ENCODE measurements at regions of chr7 and their contacts with region 1.

Region 1: GRCh38 chr7:7103343-7104313 is 78.7 kb upstream of the C1GALT1 start:
- DNase-seq: peak in 1 of 2 experiments; percentile 44
- H3K4me3 ChIP-seq: no peak overlapping the region
- H3K4me3 Mint-ChIP-seq: no peak overlapping the region
- H3K27ac Mint-ChIP-seq: peak overlapping the region; percentile 28
- H3K4me1 ChIP-seq: peaks cover 23% of the 10 kb centered on the region
- H3K4me1 Mint-ChIP-seq: peaks cover 34% of the 10 kb centered on the region
- H3K27me3 ChIP-seq: no peaks in the 10 kb centered on the region
- H3K27me3 Mint-ChIP-seq: no peaks in the 10 kb centered on the region
- CTCF ChIP-seq: peak; percentile 52 to 64

Region 2: GRCh38 chr7:7077945-7078344 is 25.7 kb before region 1 on chr7:
- CTCF ChIA-PET with region 1: no interaction called
- POLR2A ChIA-PET with region 1: no interaction called
- intact Hi-C with region 1: no loop called
- DNase-seq: no peak
- H3K4me3 ChIP-seq: no peak overlapping the region
- H3K4me3 Mint-ChIP-seq: no peak overlapping the region
- H3K27ac Mint-ChIP-seq: no peak overlapping the region
- H3K4me1 ChIP-seq: no peaks in the 10 kb centered on the region
- H3K4me1 Mint-ChIP-seq: peaks cover 4% of the 10 kb centered on the region
- H3K27me3 ChIP-seq: no peaks in the 10 kb centered on the region
- H3K27me3 Mint-ChIP-seq: no peaks in the 10 kb centered on the region
- CTCF ChIP-seq: no peak

Region 3: GRCh38 chr7:7265081-7265686 is 161.6 kb after region 1 on chr7:
- CTCF ChIA-PET with region 1: no interaction called
- POLR2A ChIA-PET with region 1: no interaction called
- intact Hi-C with region 1: loop called (anchors 10 kb)
- DNase-seq: no peak
- H3K4me3 ChIP-seq: no peak overlapping the region
- H3K4me3 Mint-ChIP-seq: no peak overlapping the region
- H3K27ac Mint-ChIP-seq: peak overlapping the region; percentile 97
- H3K4me1 ChIP-seq: peaks cover 58% of the 10 kb centered on the region
- H3K4me1 Mint-ChIP-seq: peaks cover 41% of the 10 kb centered on the region
- H3K27me3 ChIP-seq: no peaks in the 10 kb centered on the region; the same call in 1 of the 2 replicates
- H3K27me3 Mint-ChIP-seq: no peaks in the 10 kb centered on the region
- CTCF ChIP-seq: no peak

Region 4: GRCh38 chr7:7352845-7353244 is 249.2 kb after region 1 on chr7:
- CTCF ChIA-PET with region 1: interaction called, 4 read pairs
- POLR2A ChIA-PET with region 1: no interaction called
- intact Hi-C with region 1: loop called (anchors 5 kb)
- DNase-seq: no peak
- H3K4me3 ChIP-seq: no peak overlapping the region
- H3K4me3 Mint-ChIP-seq: no peak overlapping the region
- H3K27ac Mint-ChIP-seq: no peak overlapping the region
- H3K4me1 ChIP-seq: peaks cover 12% of the 10 kb centered on the region; the same call in 1 of the 2 replicates
- H3K4me1 Mint-ChIP-seq: peaks cover 16% of the 10 kb centered on the region
- H3K27me3 ChIP-seq: no peaks in the 10 kb centered on the region
- H3K27me3 Mint-ChIP-seq: no peaks in the 10 kb centered on the region
- CTCF ChIP-seq: peak; percentile 15 to 20

Region 5: DNA sequence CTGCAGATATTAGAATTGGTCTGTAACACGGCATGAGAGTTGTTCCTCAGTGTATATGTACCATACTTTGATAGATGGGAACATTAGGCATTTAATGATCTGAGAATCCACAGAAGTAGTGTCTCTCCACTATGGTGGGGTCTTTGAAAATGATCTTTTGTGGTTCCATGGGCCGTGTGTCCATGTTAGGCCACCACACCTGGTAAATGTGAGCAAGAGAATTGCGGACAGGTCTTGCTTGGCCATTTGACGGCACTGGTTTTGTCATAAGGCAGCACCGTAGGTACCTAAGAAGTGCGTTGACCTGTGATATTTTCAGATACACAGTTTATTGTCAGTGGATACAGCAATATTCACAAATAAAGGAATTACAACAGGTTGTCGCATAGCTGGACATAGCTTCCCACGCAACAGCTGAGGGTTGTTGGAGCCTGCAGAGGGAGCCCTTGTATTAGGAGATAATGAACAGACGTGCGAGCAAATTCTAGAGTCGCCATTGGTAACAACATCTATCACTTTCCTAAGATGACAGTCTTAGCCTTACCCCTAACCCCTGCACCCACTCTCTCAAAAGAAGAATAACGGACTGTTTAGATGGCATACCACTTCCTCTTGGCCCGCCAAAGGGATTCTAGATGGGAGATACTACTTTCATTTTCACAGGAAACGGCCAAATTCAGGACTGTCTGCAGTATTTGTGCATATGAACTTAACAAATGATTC is 320.7 kb after region 1 on chr7:
- CTCF ChIA-PET with region 1: interaction called, 5 read pairs
- POLR2A ChIA-PET with region 1: no interaction called
- intact Hi-C with region 1: loop called (anchors 2 kb)
- DNase-seq: peak; percentile 62 to 75
- H3K4me3 ChIP-seq: no peak overlapping the region
- H3K4me3 Mint-ChIP-seq: no peak overlapping the region
- H3K27ac Mint-ChIP-seq: no peak overlapping the region
- H3K4me1 ChIP-seq: no peaks in the 10 kb centered on the region
- H3K4me1 Mint-ChIP-seq: no peaks in the 10 kb centered on the region
- H3K27me3 ChIP-seq: no peaks in the 10 kb centered on the region
- H3K27me3 Mint-ChIP-seq: no peaks in the 10 kb centered on the region
- CTCF ChIP-seq: peak; percentile 86 to 93

Region 6: DNA sequence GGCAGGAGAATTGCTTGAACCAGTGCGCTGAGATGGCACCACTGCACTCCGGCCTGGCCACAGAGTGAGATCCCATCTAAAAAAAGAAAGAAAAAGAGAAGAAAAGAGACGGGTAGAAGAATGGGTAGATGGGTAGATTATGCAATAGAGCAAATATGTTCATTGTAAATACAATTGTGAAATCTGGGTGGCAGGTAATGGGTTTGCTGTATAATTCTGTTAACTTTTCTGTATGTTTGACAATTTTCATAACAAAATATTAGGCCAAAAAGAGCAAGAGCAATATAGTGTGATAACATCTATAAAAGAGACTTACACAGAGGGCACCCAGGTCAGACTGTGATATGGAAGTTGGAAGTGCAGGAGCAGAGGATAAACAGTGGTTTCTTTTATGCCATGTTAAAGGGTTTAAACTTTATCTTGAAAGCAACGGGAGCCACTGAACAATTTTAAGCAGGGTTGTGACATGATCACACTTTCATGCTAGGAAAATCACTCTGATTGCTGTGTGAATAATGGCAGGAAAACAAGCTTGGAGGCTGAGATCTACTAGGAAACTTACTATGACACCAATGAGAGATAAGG is 438.7 kb after region 1 on chr7:
- CTCF ChIA-PET with region 1: interaction called, 3 read pairs
- POLR2A ChIA-PET with region 1: no interaction called
- intact Hi-C with region 1: loop called (anchors 2 kb)
- DNase-seq: no peak
- H3K4me3 ChIP-seq: no peak overlapping the region
- H3K4me3 Mint-ChIP-seq: no peak overlapping the region
- H3K27ac Mint-ChIP-seq: no peak overlapping the region
- H3K4me1 ChIP-seq: peaks cover 7% of the 10 kb centered on the region
- H3K4me1 Mint-ChIP-seq: peaks cover 18% of the 10 kb centered on the region
- H3K27me3 ChIP-seq: no peaks in the 10 kb centered on the region
- H3K27me3 Mint-ChIP-seq: no peaks in the 10 kb centered on the region
- CTCF ChIP-seq: no peak